ENCODE measurements at regions of chr11 and their contacts with region 1.

Region 1: DNA sequence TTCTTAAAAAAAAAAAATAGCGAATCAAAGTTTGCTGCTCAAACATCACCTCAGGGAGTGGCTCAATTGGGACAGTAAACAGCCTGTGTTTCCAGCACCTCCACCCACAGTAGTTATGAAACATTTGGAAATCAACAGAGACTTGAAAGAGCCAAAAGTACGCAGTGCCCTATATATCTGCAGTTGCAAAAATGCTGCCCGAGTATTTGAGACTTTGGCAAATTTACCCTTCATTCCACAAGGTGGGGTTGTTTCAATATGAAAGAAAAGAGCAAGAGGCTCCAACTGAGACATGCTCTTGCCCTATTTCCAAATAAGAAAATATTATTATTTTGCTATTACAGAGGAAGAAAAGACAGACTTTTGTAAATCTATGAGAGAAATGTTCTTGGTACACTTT is 851.1 kb upstream of the RAG2 start:
- DNase-seq: no peak
- ATAC-seq: peak; percentile 76

Region 2: GRCh38 chr11:37108436-37109285 is 340.5 kb before region 1 on chr11:
- intact Hi-C with region 1: loop called (anchors 10 kb)
- DNase-seq: no peak
- ATAC-seq: no peak

Measured in Right ventricle myocardium inferior (tissue), 1 donor.